Activated naive CD4-positive, alpha-beta T cell treated with anti-CD3 and anti-CD28 coated beads, Interleukin-2, amount 10 ng/mL, durations not matched to agents 7 days and 5 days (primary cell): ENCODE measurements at regions of chr1 and their contacts with region 1.

Region 1: GRCh38 chr1:99481391-99481996 is 164.4 kb upstream of the PALMD start:
- DNase-seq: peak; percentile 48
- H3K4me3 Mint-ChIP-seq: no peak overlapping the region
- H3K27ac Mint-ChIP-seq: no peak overlapping the region
- H3K4me1 Mint-ChIP-seq: no peaks in the 10 kb centered on the region
- H3K27me3 Mint-ChIP-seq: peaks cover 8% of the 10 kb centered on the region

Region 2: DNA sequence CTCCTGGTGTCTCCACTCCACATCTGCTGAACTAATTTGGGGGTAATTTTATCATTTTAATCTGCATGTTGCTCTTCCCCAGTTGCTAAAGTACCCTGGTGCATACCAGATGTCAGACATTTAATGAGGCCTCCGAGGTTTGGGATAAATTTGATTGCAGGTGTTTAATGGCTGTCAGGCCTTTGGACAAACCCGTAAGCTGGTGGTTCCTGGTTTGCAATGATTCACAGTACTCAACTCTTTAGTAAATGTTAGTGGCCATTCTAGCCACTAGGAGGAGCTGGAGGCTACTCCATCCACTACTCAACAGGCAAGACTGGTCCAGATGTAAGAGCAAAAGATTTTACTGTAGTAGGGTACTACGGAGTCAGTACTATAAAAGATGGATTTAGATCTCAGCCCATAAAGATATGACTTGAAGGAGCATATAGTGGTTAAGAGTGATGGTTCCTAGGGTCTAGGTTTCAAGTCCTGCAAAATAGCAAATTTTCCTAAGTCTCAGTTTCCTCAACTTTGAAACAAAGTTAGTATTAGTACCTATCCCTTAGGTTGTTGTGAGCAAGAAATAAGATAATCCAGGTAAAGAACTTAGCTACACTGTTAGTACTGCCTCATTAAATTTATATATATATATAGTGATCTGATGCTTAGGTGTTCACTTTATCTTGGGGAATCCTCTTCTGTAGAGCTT is 687.2 kb before region 1 on chr1:
- CTCF ChIA-PET with region 1: interaction called, 10 read pairs
- DNase-seq: peak; percentile 66
- H3K4me3 Mint-ChIP-seq: no peak overlapping the region
- H3K27ac Mint-ChIP-seq: no peak overlapping the region
- H3K4me1 Mint-ChIP-seq: peaks cover 21% of the 10 kb centered on the region
- H3K27me3 Mint-ChIP-seq: peaks cover 5% of the 10 kb centered on the region

Region 3: DNA sequence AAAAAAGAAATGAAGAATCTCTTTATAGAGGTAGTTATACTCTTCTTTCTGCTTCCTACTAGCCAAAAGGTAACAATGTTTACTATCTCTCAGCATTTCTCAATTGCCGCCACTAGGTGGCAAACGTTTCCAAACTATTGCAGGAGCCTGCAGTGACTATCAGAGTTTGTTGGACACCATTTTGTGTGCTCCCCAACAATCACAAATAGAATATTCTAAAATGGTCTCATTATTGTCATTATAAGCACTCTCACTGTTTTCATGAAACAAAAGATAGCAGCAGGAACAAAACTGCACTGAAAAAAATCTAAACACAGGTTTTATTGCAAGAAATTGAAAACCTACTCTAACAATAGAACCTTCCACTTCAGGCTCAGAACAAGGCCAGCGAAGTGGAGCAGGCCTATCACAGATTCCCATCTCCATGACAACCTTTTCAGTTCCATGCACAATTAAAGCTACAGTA is 301.1 kb before region 1 on chr1:
- CTCF ChIA-PET with region 1: interaction called, 29 read pairs
- DNase-seq: peak; percentile 76
- H3K4me3 Mint-ChIP-seq: no peak overlapping the region
- H3K27ac Mint-ChIP-seq: no peak overlapping the region
- H3K4me1 Mint-ChIP-seq: no peaks in the 10 kb centered on the region
- H3K27me3 Mint-ChIP-seq: no peaks in the 10 kb centered on the region

Region 4: GRCh38 chr1:99503276-99503747 is 21.8 kb after region 1 on chr1:
- CTCF ChIA-PET with region 1: no interaction called
- DNase-seq: no peak
- H3K4me3 Mint-ChIP-seq: no peak overlapping the region
- H3K27ac Mint-ChIP-seq: no peak overlapping the region
- H3K4me1 Mint-ChIP-seq: no peaks in the 10 kb centered on the region
- H3K27me3 Mint-ChIP-seq: no peaks in the 10 kb centered on the region

Region 5: GRCh38 chr1:99717005-99717404 is 235.5 kb after region 1 on chr1:
- CTCF ChIA-PET with region 1: no interaction called
- DNase-seq: no peak
- H3K4me3 Mint-ChIP-seq: no peak overlapping the region
- H3K27ac Mint-ChIP-seq: no peak overlapping the region
- H3K4me1 Mint-ChIP-seq: no peaks in the 10 kb centered on the region
- H3K27me3 Mint-ChIP-seq: peaks cover 5% of the 10 kb centered on the region

Region 6: GRCh38 chr1:99766378-99766800 is 284.9 kb after region 1 on chr1 and contains the start of gene FRRS1:
- CTCF ChIA-PET with region 1: no interaction called
- DNase-seq: peak; percentile 57
- H3K4me3 Mint-ChIP-seq: peak within 1 kb of the TSS; percentile 68
- H3K27ac Mint-ChIP-seq: peak within 1 kb of the TSS; percentile 3
- H3K4me1 Mint-ChIP-seq: peaks cover 11% of the 10 kb centered on the region
- H3K27me3 Mint-ChIP-seq: peaks cover 33% of the 10 kb centered on the region